ENCODE measurements at regions of chr6 and their contacts with region 1.

Region 1: GRCh38 chr6:113306552-113307145 is 550.5 kb upstream of the MARCKS start:
- DNase-seq: peak; percentile 71
- ATAC-seq: peak; percentile 99
- H3K4me3 ChIP-seq: no peak overlapping the region
- H3K4me3 Mint-ChIP-seq: no peak overlapping the region
- H3K27ac ChIP-seq: no peak overlapping the region
- H3K27ac Mint-ChIP-seq: no peak overlapping the region
- H3K4me1 ChIP-seq: peaks cover 0 to 5% of the 10 kb centered on the region in 2 donors
- H3K4me1 Mint-ChIP-seq: peaks cover 8% of the 10 kb centered on the region
- H3K27me3 ChIP-seq: no peaks in the 10 kb centered on the region
- H3K27me3 Mint-ChIP-seq: no peaks in the 10 kb centered on the region
- CTCF ChIP-seq: peak; percentile 81

Region 2: GRCh38 chr6:112180095-112180820 is 1126.4 kb before region 1 on chr6:
- CTCF ChIA-PET with region 1: interaction called, 4 read pairs
- POLR2A ChIA-PET with region 1: no interaction called
- intact Hi-C with region 1: loop called (anchors 1 kb)
- DNase-seq: peak; percentile 80
- ATAC-seq: peak; percentile 57
- H3K4me3 ChIP-seq: no peak overlapping the region
- H3K4me3 Mint-ChIP-seq: no peak overlapping the region
- H3K27ac ChIP-seq: no peak overlapping the region
- H3K27ac Mint-ChIP-seq: no peak overlapping the region
- H3K4me1 ChIP-seq: no peaks in the 10 kb centered on the region
- H3K4me1 Mint-ChIP-seq: no peaks in the 10 kb centered on the region
- H3K27me3 ChIP-seq: peaks cover 0 to 3% (median 1%) of the 10 kb centered on the region in 4 experiments
- H3K27me3 Mint-ChIP-seq: peaks cover 32% of the 10 kb centered on the region
- CTCF ChIP-seq: peak; percentile 88

Region 3: GRCh38 chr6:112725541-112726085 is 581.0 kb before region 1 on chr6:
- CTCF ChIA-PET with region 1: no interaction called
- POLR2A ChIA-PET with region 1: no interaction called
- intact Hi-C with region 1: no loop called
- DNase-seq: no peak
- ATAC-seq: no peak
- H3K4me3 ChIP-seq: no peak overlapping the region
- H3K4me3 Mint-ChIP-seq: no peak overlapping the region
- H3K27ac ChIP-seq: no peak overlapping the region
- H3K27ac Mint-ChIP-seq: no peak overlapping the region
- H3K4me1 ChIP-seq: no peaks in the 10 kb centered on the region
- H3K4me1 Mint-ChIP-seq: no peaks in the 10 kb centered on the region
- H3K27me3 ChIP-seq: no peaks in the 10 kb centered on the region
- H3K27me3 Mint-ChIP-seq: peaks cover 3% of the 10 kb centered on the region
- CTCF ChIP-seq: no peak

Region 4: DNA sequence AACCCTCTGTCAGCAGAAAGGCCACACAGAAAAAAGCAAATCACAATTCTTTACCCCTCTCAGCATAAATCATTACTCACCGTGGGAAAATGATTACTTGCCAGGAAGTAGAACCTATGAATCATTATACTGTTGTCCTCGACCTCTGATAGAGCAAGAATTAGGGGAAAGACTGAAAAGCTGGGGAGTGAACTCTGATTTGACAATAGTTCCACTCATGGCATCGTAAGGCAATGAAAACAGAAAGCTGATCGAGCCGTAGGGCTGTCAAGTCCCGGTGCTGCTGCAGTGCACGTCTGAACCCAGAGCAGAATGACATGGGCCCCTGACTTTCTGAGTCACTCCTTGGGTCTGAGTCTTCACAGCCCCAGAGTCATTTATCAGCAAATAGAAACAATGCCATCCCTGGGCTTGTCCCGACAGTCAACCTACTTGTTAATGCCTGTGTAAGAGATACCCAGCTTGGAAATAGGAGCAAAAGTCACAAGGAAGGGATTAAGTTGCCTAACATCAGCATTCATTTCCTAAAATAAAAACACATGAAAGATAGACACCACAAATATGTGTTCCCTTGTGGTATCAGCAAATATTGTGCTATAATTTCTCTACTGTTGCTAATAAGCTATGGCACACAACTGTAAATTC is 325.7 kb after region 1 on chr6:
- CTCF ChIA-PET with region 1: interaction called, 5 read pairs
- POLR2A ChIA-PET with region 1: no interaction called
- intact Hi-C with region 1: loop called (anchors 5 kb)
- DNase-seq: peak; percentile 52
- ATAC-seq: peak; percentile 16
- H3K4me3 ChIP-seq: peak overlapping the region in 2 of 5 experiments; percentile 7 to 42
- H3K4me3 Mint-ChIP-seq: peak overlapping the region; percentile 82
- H3K27ac ChIP-seq: peak overlapping the region; percentile 98 to 100
- H3K27ac Mint-ChIP-seq: peak overlapping the region; percentile 93
- H3K4me1 ChIP-seq: peaks cover 87 to 88% of the 10 kb centered on the region in 2 donors
- H3K4me1 Mint-ChIP-seq: peaks cover 77% of the 10 kb centered on the region
- H3K27me3 ChIP-seq: no peaks in the 10 kb centered on the region
- H3K27me3 Mint-ChIP-seq: no peaks in the 10 kb centered on the region
- CTCF ChIP-seq: no peak

Region 5: GRCh38 chr6:113805173-113805790 is 498.6 kb after region 1 on chr6:
- CTCF ChIA-PET with region 1: interaction called, 17 read pairs
- POLR2A ChIA-PET with region 1: no interaction called
- intact Hi-C with region 1: no loop called
- DNase-seq: peak; percentile 63
- ATAC-seq: peak; percentile 38
- H3K4me3 ChIP-seq: peak overlapping the region in 2 of 5 experiments; percentile 13 to 45
- H3K4me3 Mint-ChIP-seq: peak overlapping the region; percentile 64
- H3K27ac ChIP-seq: peak overlapping the region; percentile 46 to 50
- H3K27ac Mint-ChIP-seq: peak overlapping the region; percentile 81
- H3K4me1 ChIP-seq: peaks cover 41 to 47% of the 10 kb centered on the region in 2 donors
- H3K4me1 Mint-ChIP-seq: peaks cover 51% of the 10 kb centered on the region
- H3K27me3 ChIP-seq: no peaks in the 10 kb centered on the region
- H3K27me3 Mint-ChIP-seq: no peaks in the 10 kb centered on the region
- CTCF ChIP-seq: no peak

Region 6: GRCh38 chr6:113879186-113880096 is 572.8 kb after region 1 on chr6:
- CTCF ChIA-PET with region 1: interaction called, 52 read pairs
- POLR2A ChIA-PET with region 1: no interaction called
- intact Hi-C with region 1: loop called (anchors 1 kb)
- DNase-seq: peak; percentile 74
- ATAC-seq: peak; percentile 100
- H3K4me3 ChIP-seq: no peak overlapping the region
- H3K4me3 Mint-ChIP-seq: no peak overlapping the region
- H3K27ac ChIP-seq: no peak overlapping the region
- H3K27ac Mint-ChIP-seq: no peak overlapping the region
- H3K4me1 ChIP-seq: no peaks in the 10 kb centered on the region
- H3K4me1 Mint-ChIP-seq: peaks cover 3% of the 10 kb centered on the region
- H3K27me3 ChIP-seq: no peaks in the 10 kb centered on the region
- H3K27me3 Mint-ChIP-seq: no peaks in the 10 kb centered on the region
- CTCF ChIP-seq: peak; percentile 91